Right lobe of liver (tissue), 6 donors: ENCODE measurements at regions of chr7 and their contacts with region 1.

Region 1: GRCh38 chr7:139494835-139495579 is 11.5 kb upstream of the KLRG2 start:
- DNase-seq: no peak
- ATAC-seq: no peak
- H3K4me3 ChIP-seq: no peak overlapping the region
- H3K27ac ChIP-seq: no peak overlapping the region
- H3K4me1 ChIP-seq: no peaks in the 10 kb centered on the region
- H3K27me3 ChIP-seq: no peaks in the 10 kb centered on the region
- CTCF ChIP-seq: no peak
- POLR2A ChIP-seq: no peak

Region 2: GRCh38 chr7:140003913-140004382 is 508.9 kb after region 1 on chr7:
- intact Hi-C with region 1: loop called (anchors 10 kb)
- DNase-seq: no peak
- ATAC-seq: peak in 3 of 4 donors; percentile 22 to 30 (median 24)
- H3K4me3 ChIP-seq: no peak overlapping the region
- H3K27ac ChIP-seq: no peak overlapping the region
- H3K4me1 ChIP-seq: peaks cover 0 to 4% (median 0%) of the 10 kb centered on the region in 4 donors
- H3K27me3 ChIP-seq: no peaks in the 10 kb centered on the region
- CTCF ChIP-seq: peak; percentile 42 to 51 (median 44)
- POLR2A ChIP-seq: no peak